Activated naive CD4-positive, alpha-beta T cell treated with anti-CD3 and anti-CD28 coated beads, Interleukin-2, amount 10 ng/mL, durations not matched to agents 7 days and 5 days (primary cell): ENCODE measurements at regions of chr15 and their contacts with region 1.

Region 1: DNA sequence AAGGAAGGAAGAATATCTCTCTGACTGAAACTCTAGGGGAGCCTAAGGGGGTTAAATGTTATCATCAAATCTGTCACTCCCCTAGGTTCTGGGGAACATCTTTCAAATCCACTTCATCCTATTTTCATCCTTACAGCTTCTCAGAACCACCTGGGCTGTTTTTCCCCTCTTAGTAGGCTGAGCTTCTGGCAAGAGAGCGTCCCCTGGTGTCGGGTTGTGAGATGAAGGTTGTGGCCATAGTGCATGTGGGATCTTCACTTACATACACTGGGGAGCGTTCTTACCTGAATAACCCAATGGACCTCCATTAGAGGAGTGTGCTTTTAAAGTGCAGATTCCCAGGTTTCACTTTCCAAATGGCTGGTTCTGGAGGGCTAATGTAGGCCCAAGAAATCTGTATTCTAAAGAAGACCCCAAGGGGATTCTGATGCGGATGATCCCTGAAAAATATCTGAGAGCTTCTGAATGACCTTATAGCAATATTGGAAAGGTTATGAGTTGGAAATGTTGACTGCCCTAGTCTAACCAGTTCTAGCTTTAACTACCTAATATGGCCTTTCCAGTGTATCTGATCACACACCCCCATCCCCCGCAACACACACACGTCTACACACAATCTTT is 663.7 kb downstream of the AGBL1 start:
- DNase-seq: peak; percentile 63
- H3K4me3 Mint-ChIP-seq: no peak overlapping the region
- H3K27ac Mint-ChIP-seq: no peak overlapping the region
- H3K4me1 Mint-ChIP-seq: no peaks in the 10 kb centered on the region
- H3K27me3 Mint-ChIP-seq: peaks cover 4% of the 10 kb centered on the region

Region 2: DNA sequence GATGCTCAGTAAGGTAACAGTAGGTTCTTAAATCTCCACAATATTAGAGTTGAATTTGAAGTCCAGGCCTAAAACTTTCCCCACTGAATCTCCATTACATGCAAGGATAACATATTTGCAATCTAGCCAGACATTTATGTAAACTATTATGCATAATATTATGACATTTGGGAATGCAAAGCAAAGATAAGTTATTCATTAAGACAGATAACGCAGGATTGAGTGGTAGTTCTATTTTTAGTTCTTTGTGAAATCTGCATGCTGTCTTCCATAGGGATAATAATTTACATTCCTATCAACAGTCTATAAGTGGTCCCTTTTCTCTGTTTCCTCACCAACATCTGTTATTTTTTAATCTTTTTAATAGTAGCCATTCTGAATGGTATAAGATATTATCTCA is 330.2 kb before region 1 on chr15:
- CTCF ChIA-PET with region 1: no interaction called
- DNase-seq: no peak
- H3K4me3 Mint-ChIP-seq: no peak overlapping the region
- H3K27ac Mint-ChIP-seq: no peak overlapping the region
- H3K4me1 Mint-ChIP-seq: no peaks in the 10 kb centered on the region
- H3K27me3 Mint-ChIP-seq: peaks cover 4% of the 10 kb centered on the region

Region 3: DNA sequence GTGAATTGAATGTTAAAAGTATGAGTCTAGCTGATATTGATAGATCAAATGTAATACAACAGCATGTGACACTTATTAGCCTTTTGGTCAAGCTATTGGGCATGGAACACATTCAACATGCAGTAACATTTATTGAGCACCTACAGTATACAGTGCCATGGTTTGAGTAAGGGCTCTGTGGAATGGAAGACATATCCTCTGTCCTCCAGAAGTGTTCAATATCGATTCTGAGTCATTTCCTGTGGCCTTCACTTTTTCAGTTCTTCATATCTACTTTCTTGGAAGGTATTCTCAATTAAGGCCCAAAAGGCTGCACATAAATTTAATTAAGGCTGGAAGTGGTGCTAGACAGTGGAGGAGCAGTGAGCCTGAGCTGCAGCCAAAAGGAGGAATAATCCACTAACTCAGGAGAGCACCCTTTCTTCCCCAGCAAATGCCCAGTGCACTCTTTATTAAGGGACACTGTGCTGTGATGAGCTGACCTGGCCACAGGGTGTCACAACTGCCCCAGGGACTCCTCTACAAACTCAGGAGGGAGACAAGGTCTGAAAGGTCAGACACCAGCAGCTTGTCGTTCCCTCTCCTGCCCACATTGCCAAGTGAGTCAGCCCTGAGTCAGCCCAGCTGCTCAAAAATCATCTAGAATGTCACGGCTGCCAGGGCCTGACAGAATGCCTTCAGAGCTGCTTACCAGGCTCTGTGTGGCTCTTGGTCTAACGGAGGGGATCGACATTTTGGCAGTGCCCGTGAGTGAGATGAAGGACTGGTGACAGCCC is 118.9 kb before region 1 on chr15:
- CTCF ChIA-PET with region 1: interaction called, 79 read pairs
- DNase-seq: peak; percentile 59
- H3K4me3 Mint-ChIP-seq: no peak overlapping the region
- H3K27ac Mint-ChIP-seq: no peak overlapping the region
- H3K4me1 Mint-ChIP-seq: peaks cover 16% of the 10 kb centered on the region
- H3K27me3 Mint-ChIP-seq: peaks cover 9% of the 10 kb centered on the region

Region 4: GRCh38 chr15:86653344-86654197 is 89.8 kb before region 1 on chr15:
- CTCF ChIA-PET with region 1: interaction called, 14 read pairs
- DNase-seq: no peak
- H3K4me3 Mint-ChIP-seq: peak overlapping the region; percentile 7
- H3K27ac Mint-ChIP-seq: peak overlapping the region; percentile 80
- H3K4me1 Mint-ChIP-seq: peaks cover 52% of the 10 kb centered on the region
- H3K27me3 Mint-ChIP-seq: no peaks in the 10 kb centered on the region

Region 5: DNA sequence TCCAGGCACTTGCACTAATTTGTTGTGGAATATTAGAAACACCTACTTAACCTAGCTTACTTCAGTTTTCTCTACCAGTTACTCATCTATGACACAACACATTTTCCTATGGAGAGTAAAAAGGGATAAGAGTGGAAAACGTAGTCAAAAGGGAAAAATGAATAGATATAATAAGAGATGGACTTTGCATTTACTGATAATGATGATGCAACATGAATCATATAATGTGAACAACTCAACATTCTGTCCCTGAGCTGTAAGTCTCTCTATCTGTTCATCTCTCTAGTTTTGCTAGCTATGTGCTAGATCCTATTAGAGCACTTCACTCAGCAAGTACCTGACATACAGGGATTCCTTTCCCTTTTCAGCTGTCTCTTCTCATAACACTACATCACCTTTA is 36.6 kb before region 1 on chr15:
- CTCF ChIA-PET with region 1: no interaction called
- DNase-seq: no peak
- H3K4me3 Mint-ChIP-seq: no peak overlapping the region
- H3K27ac Mint-ChIP-seq: no peak overlapping the region
- H3K4me1 Mint-ChIP-seq: no peaks in the 10 kb centered on the region
- H3K27me3 Mint-ChIP-seq: no peaks in the 10 kb centered on the region

Region 6: GRCh38 chr15:86863226-86863915 is 120.0 kb after region 1 on chr15:
- CTCF ChIA-PET with region 1: no interaction called
- DNase-seq: no peak
- H3K4me3 Mint-ChIP-seq: no peak overlapping the region
- H3K27ac Mint-ChIP-seq: no peak overlapping the region
- H3K4me1 Mint-ChIP-seq: no peaks in the 10 kb centered on the region
- H3K27me3 Mint-ChIP-seq: no peaks in the 10 kb centered on the region